T-cell (primary cell): ENCODE measurements at regions of chr19 and their contacts with region 1.

Region 1: DNA sequence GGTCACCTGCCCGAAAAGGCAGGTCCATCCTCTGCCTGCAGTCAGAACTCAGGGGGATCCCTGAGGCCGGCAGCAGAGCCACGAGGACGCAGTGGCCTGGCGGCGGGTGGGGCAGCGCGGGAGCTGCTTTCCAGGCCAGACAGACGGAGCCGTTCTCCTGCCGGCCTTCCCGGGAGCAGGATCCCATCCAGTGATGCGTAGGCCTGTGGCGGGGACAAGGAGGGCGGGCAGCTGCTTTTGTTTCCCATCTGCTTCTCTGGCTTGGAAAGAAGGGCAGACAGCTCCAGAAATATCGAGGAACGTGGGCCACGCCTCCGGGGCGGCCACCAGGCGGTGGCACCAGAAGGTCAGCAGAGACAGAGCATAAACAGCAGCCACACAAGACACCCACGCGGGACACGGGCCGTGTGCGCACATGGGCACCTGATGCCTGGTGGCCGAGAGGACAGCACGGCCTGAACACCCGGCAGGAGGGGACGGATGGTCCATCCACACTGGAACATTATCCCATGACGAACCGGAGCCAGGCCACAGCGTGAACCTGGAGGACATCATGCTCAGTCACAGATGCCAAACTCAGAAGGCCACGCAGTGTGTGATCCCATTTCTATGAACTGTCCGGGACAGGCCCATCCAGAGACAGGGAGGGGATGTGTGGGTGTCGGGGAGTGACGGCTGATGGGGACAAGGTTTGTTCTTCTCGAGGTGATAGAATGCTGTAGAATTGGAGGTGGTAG is 13.9 kb upstream of the MKNK2 start:
- DNase-seq: no peak
- ATAC-seq: no peak
- H3K4me3 ChIP-seq: no peak overlapping the region
- H3K4me3 Mint-ChIP-seq: no peak overlapping the region
- H3K27ac ChIP-seq: no peak overlapping the region
- H3K27ac Mint-ChIP-seq: peak overlapping the region in 1 of 2 donors; percentile 23
- H3K4me1 ChIP-seq: peaks cover 16 to 36% of the 10 kb centered on the region in 2 experiments
- H3K4me1 Mint-ChIP-seq: peaks cover 31 to 36% (median 32%) of the 10 kb centered on the region in 3 donors
- H3K27me3 ChIP-seq: no peaks in the 10 kb centered on the region
- H3K27me3 Mint-ChIP-seq: no peaks in the 10 kb centered on the region

Region 2: DNA sequence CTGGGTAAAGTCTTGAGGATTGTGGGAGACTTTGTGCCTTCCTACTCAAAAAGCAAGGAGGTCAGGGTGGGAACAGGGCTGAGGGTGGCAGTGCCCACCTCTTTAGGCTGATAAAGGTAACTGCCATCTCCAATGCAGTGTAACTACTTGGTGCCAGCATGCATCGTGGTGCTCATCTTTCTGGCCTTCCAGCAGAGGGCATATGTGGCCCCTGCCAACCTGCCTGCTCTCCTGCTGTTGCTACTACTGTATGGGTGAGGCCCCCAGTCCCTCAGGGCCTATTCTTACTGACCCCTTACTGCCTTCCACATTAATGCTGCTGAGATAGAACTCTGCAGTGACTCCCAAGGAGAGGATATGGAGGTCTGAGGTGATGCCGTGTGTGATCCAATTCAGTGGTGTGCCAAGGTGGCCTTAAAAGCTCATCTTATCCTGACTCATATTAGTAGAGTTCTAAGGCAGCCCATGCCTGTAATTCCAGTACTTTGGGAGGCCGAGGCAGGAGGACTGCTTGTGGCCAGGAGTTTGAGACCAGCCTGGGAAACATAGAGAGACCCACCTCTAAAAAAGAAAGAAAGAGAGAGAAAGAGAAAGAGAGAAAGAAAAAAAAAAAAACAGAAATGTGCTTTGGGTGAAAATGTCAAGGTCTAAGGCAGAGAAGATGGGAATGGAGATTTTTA is 1007.6 kb before region 1 on chr19:
- CTCF ChIA-PET with region 1: no interaction called
- POLR2A ChIA-PET with region 1: no interaction called
- DNase-seq: peak in 4 of 35 experiments; percentile 38 to 72 (median 53)
- ATAC-seq: peak; percentile 79 to 82 (median 79)
- H3K4me3 ChIP-seq: peak overlapping the region in 1 of 2 donors; percentile 40
- H3K4me3 Mint-ChIP-seq: peak overlapping the region in 1 of 3 donors; percentile 43
- H3K27ac ChIP-seq: peak overlapping the region; percentile 41
- H3K27ac Mint-ChIP-seq: peak overlapping the region; percentile 73 to 95
- H3K4me1 ChIP-seq: peaks cover 0 to 22% of the 10 kb centered on the region in 2 experiments
- H3K4me1 Mint-ChIP-seq: peaks cover 19 to 30% (median 25%) of the 10 kb centered on the region in 3 donors
- H3K27me3 ChIP-seq: no peaks in the 10 kb centered on the region
- H3K27me3 Mint-ChIP-seq: no peaks in the 10 kb centered on the region

Region 3: DNA sequence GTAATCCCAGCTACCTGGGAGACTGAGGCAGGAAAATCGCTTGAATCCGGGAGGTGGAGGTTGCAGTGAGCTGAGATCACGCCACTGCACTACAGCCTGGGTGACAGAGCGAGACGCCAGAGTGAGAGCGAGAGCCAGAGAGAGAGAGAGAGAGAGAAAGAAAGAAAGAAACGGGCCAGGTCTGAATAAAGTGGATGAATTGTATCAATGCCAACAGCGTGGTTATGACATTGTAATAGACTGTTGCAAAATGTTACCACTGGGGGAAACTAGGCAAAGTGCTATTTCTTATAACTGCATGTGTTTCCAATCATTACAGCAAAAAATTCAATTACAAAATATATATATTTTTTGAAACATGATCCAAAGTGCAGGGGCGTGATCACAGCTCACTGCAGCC is 37.6 kb before region 1 on chr19:
- CTCF ChIA-PET with region 1: no interaction called
- POLR2A ChIA-PET with region 1: interaction called in 1 of 2 experiments, 10 read pairs
- DNase-seq: no peak
- ATAC-seq: no peak
- H3K4me3 ChIP-seq: no peak overlapping the region
- H3K4me3 Mint-ChIP-seq: no peak overlapping the region
- H3K27ac ChIP-seq: no peak overlapping the region
- H3K27ac Mint-ChIP-seq: no peak overlapping the region
- H3K4me1 ChIP-seq: peaks cover 4 to 10% of the 10 kb centered on the region in 2 experiments
- H3K4me1 Mint-ChIP-seq: peaks cover 8 to 10% (median 9%) of the 10 kb centered on the region in 3 donors
- H3K27me3 ChIP-seq: no peaks in the 10 kb centered on the region
- H3K27me3 Mint-ChIP-seq: no peaks in the 10 kb centered on the region

Region 4: GRCh38 chr19:2084993-2085720 is 20.2 kb after region 1 on chr19:
- CTCF ChIA-PET with region 1: interaction called in 1 of 2 experiments, 3 read pairs
- POLR2A ChIA-PET with region 1: interaction called in 1 of 2 experiments, 11 read pairs
- DNase-seq: peak; percentile 76 to 98 (median 94)
- ATAC-seq: peak; percentile 70 to 80 (median 76)
- H3K4me3 ChIP-seq: peak overlapping the region; percentile 92 to 99
- H3K4me3 Mint-ChIP-seq: peak overlapping the region; percentile 98 to 99 (median 99)
- H3K27ac ChIP-seq: peak overlapping the region; percentile 97
- H3K27ac Mint-ChIP-seq: peak overlapping the region; percentile 99
- H3K4me1 ChIP-seq: peaks cover 39 to 90% of the 10 kb centered on the region in 2 experiments
- H3K4me1 Mint-ChIP-seq: peaks cover 76 to 80% (median 76%) of the 10 kb centered on the region in 3 donors
- H3K27me3 ChIP-seq: no peaks in the 10 kb centered on the region
- H3K27me3 Mint-ChIP-seq: no peaks in the 10 kb centered on the region

Region 5: DNA sequence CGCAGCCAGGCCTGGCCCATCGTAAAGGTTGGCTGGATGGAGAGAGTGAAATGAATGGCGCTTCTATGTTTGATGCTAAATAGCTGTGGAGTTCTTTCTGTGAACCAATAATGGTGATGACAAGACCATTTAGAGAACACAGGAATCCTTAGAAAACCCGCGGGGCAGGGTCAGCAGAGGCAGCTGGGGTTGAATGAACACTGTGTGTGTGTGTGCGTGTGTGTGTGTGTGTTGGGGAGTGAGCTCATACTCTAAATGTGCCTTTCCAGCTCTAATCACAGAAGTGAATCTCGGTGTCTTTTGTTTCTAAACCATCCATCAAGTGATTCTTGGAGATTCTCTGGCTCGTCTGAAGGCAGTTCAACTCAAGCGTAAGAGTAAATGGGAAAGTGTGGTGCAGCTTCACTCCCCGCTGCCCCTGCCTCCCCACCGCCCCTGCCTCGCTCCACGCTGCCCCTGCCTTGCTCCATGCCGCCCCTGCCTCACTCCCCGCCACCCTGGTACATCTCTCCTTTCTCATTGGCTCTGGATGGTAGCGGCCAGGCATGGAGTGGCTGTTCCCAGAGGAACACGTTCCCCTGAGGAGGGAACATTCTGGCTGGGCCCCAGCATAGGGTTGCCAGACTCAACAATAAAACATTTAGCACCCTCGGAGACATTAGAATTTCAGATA is 316.3 kb after region 1 on chr19:
- CTCF ChIA-PET with region 1: no interaction called
- POLR2A ChIA-PET with region 1: no interaction called
- DNase-seq: no peak
- ATAC-seq: no peak
- H3K4me3 ChIP-seq: no peak overlapping the region
- H3K4me3 Mint-ChIP-seq: no peak overlapping the region
- H3K27ac ChIP-seq: no peak overlapping the region
- H3K27ac Mint-ChIP-seq: no peak overlapping the region
- H3K4me1 ChIP-seq: no peaks in the 10 kb centered on the region
- H3K4me1 Mint-ChIP-seq: peaks cover 0 to 11% (median 0%) of the 10 kb centered on the region in 3 donors
- H3K27me3 ChIP-seq: peaks cover 0 to 34% of the 10 kb centered on the region in 2 experiments
- H3K27me3 Mint-ChIP-seq: peaks cover 4 to 5% of the 10 kb centered on the region in 2 donors